Mammary epithelial cell (primary cell): ENCODE measurements at regions of chr18 and their contacts with region 1.

Region 1: DNA sequence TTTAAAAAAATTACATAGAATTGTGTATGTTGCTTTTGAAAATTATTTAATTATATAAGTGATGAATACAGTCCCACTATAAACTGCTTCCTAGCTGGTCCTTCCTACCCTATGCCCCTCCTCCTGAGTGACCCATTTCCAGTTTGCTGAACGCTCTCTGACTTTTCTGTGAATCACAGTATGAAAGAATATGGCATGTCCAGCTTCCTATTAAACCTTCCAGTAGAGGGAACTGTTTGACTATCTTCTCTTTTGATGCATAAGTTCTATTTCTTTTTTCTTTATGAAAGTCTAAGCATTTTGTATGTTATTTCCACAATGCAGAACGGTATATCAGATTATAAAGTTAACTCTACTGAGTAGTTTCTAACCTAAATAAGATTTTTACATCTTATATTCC is 41.3 kb downstream of the PSMG2 start:
- DNase-seq: peak; percentile 64
- H3K4me3 ChIP-seq: no peak overlapping the region
- H3K27ac ChIP-seq: no peak overlapping the region
- H3K4me1 ChIP-seq: peaks cover 15% of the 10 kb centered on the region
- H3K27me3 ChIP-seq: no peaks in the 10 kb centered on the region
- CTCF ChIP-seq: peak; percentile 65 to 66

Region 2: DNA sequence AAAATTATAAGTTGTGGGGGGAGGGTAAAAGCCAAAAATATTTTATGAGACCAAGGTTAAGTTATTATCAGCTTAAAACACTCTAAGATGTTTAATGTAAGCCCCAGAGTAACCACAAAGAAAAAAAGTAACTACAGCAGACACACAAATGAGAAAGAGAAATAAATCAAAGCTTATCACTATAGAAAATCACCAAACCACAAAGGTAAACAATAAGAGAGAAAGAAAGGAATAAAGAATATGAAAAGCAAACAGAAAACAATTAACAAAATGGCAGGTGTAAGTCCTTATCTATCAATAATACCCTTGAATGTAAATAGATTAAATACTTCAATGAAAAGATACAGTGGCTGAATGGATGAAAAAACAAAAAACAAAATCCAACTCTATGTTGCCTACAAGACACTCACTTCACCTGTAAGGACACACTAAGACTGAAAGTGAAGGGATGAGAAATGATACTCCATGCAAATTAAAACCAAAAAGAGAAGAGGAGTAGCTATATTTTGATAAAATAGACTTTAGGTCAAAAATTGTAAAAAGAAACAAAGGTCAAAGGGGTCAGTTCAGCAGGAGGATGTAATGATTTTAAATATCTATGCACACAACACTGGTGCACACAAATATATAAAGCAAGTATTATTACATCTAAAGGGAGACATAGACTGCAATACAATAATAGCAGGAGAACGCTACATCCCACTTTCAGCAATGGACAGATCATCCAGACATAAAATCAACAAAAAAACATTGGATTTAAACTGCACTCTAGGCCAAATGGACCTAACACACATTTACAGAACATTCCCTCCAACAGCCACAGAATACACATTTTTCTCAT is 59.2 kb after region 1 on chr18:
- CTCF ChIA-PET with region 1: no interaction called
- dilution Hi-C with region 1: no loop called
- in situ Hi-C with region 1: no loop called
- intact Hi-C with region 1: loop called (anchors 5 kb)
- DNase-seq: no peak
- H3K4me3 ChIP-seq: no peak overlapping the region
- H3K27ac ChIP-seq: no peak overlapping the region
- H3K4me1 ChIP-seq: no peaks in the 10 kb centered on the region
- H3K27me3 ChIP-seq: no peaks in the 10 kb centered on the region
- CTCF ChIP-seq: no peak

Region 3: DNA sequence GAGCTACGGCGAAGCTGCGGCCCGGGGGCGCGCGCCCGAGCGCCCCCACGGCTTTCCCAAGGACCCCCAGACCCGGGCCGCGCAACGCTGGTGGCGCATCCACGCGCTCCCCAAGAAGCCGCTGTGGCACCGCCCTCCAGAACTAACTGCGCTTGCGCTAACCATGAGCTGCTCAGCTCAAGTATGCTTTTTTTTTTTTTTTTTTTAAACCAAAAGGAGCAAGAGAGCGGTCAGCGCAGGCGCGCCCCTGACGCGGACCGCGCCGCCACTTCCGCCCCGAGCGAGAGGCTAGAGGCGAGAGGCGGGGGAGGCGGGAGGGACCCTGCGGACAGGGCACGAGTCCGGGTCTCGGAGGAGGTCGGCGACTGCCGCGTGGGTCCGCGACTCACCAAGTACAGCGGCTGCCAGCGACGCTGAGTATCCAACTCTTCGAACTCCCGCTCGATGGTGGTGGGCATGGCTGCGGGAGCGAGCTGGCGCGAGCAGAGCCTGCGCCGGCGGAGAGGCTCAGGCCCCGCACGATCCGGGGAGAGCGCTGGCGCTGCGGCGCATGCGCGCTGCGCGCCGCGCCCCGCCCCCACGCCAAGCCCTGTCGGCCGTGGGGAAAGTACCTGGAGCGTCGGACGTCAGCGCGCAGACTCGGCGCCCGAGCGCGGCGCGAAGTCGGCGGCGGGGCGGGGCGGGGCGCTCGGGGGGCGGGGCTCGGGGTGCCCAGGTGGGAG is 139.7 kb after region 1 on chr18 and contains the start of gene PTPN2:
- CTCF ChIA-PET with region 1: interaction called, 32 read pairs
- dilution Hi-C with region 1: no loop called
- in situ Hi-C with region 1: no loop called
- intact Hi-C with region 1: no loop called
- DNase-seq: peak; percentile 92
- H3K4me3 ChIP-seq: peak within 1 kb of the TSS; percentile 89 to 97 (median 93)
- H3K27ac ChIP-seq: peak within 1 kb of the TSS; percentile 97
- H3K4me1 ChIP-seq: peaks cover 13% of the 10 kb centered on the region
- H3K27me3 ChIP-seq: no peaks in the 10 kb centered on the region
- CTCF ChIP-seq: no peak
- total RNA-seq, gene PTPN2: 25.3 to 47.0 TPM

Region 4: DNA sequence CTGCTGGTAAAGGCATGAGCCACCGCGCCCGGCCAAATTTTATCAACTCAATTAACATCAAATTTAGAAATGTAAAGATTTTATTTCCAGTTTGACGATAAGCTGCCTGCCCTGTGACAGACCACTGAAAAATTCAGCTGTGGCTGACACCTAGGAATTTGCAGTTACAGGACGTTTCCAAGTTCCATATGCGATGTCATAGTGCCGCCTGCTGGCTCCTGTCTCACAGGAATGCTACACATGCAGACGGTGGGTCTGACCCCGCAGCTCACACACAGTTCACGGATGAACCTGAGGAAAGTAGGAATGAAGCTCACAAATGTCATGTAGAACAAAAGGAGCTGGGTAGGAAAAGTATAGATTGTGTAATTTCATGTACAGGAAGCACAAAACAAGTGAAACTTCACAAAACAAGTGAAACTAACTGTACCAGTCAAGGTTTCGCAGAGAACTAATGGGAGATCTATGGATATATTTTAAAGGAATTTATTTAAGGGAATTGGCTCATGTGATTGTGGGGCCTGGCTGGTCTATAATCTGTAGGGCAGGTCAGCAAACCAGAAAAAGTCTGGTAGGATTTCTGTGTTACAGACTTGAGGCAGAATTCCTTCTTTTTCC is 190.5 kb after region 1 on chr18:
- CTCF ChIA-PET with region 1: interaction called, 7 read pairs
- dilution Hi-C with region 1: no loop called
- in situ Hi-C with region 1: loop called in 1 of 2 experiments (anchors 10 kb)
- intact Hi-C with region 1: loop called (anchors 1 kb)
- DNase-seq: peak; percentile 66
- H3K4me3 ChIP-seq: no peak overlapping the region
- H3K27ac ChIP-seq: no peak overlapping the region
- H3K4me1 ChIP-seq: no peaks in the 10 kb centered on the region
- H3K27me3 ChIP-seq: no peaks in the 10 kb centered on the region
- CTCF ChIP-seq: peak; percentile 97 to 98

Region 5: DNA sequence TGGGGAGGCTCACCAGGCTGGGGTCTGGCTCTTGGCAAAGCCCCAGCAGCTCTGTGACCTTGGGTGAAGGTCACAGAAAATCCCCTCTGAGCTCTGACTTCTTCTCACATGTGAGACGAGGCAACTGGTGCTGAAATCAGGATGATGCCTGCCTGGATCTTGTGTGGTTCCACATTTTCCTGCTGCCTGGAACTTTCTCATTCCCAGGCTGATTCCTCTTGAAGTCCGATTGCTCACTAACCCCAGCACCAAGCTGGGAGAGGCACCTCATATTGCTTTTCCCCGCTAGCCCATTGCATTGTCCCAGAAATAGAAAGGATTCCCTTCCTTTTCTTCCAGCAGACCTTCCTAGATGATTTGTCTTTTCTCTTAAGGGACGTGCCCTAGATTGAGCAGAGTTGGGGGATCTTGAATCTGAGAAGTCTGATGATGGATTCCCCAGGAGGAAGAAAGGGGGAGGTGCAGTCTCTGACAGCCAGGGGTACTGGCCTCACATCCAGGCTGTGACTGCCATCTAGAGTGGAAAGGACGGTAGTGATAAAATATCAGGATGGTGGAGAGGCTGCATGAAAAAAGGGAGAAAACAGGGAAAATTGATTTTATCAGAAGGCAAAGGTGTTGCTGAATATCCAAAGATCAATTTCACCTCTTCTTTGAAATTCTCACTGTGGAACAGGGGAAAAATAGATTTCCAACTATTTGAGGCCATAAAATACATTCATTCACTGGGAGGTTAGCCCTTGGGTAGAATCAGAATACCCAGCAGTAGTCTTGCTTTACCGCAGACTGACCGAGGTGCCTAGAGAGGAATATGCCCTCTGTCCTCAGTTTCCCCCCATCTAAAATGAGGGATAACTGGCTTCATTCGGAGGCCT is 886.0 kb after region 1 on chr18:
- CTCF ChIA-PET with region 1: no interaction called
- dilution Hi-C with region 1: no loop called
- in situ Hi-C with region 1: no loop called
- intact Hi-C with region 1: loop called (anchors 2 kb)
- DNase-seq: peak; percentile 43
- H3K4me3 ChIP-seq: no peak overlapping the region
- H3K27ac ChIP-seq: no peak overlapping the region
- H3K4me1 ChIP-seq: no peaks in the 10 kb centered on the region
- H3K27me3 ChIP-seq: no peaks in the 10 kb centered on the region
- CTCF ChIP-seq: peak; percentile 61 to 81